ENCODE measurements at regions of chr13 and their contacts with region 1.

Region 1: GRCh38 chr13:88976466-88976865 is 1305.3 kb downstream of the SLITRK5 start:
- DNase-seq: no peak
- ATAC-seq: no peak
- H3K4me3 ChIP-seq: no peak overlapping the region
- H3K27ac ChIP-seq: no peak overlapping the region
- H3K4me1 ChIP-seq: no peaks in the 10 kb centered on the region
- H3K27me3 ChIP-seq: no peaks in the 10 kb centered on the region
- CTCF ChIP-seq: no peak

Region 2: GRCh38 chr13:87919956-87920355 is 1056.5 kb before region 1 on chr13:
- CTCF ChIA-PET with region 1: no interaction called
- POLR2A ChIA-PET with region 1: no interaction called
- in situ Hi-C with region 1: no loop called
- intact Hi-C with region 1: no loop called
- DNase-seq: no peak
- ATAC-seq: no peak
- H3K4me3 ChIP-seq: no peak overlapping the region
- H3K27ac ChIP-seq: no peak overlapping the region
- H3K4me1 ChIP-seq: no peaks in the 10 kb centered on the region
- H3K27me3 ChIP-seq: no peaks in the 10 kb centered on the region
- CTCF ChIP-seq: no peak

Region 3: DNA sequence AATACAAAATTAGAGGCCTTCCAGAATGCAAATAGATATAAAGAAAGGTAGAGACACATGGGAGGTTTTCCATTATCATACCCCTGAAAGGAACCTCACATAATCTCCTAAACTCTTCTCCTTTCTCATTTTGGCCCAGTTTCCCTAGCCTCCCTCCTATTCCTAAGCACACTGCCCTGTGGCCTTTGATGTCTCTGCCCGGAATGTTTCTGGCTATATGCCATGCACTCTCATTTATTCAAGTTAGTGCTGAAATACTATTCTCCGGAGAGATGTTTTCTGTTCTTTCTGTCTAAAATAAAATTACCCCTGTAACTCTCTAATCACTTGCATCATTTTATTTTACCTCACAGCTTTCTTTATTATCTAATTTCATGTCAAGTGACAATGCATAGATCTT is 17.6 kb before region 1 on chr13:
- CTCF ChIA-PET with region 1: interaction called, 11 read pairs
- POLR2A ChIA-PET with region 1: no interaction called
- in situ Hi-C with region 1: no loop called
- intact Hi-C with region 1: no loop called
- DNase-seq: no peak
- ATAC-seq: no peak
- H3K4me3 ChIP-seq: no peak overlapping the region
- H3K27ac ChIP-seq: no peak overlapping the region
- H3K4me1 ChIP-seq: no peaks in the 10 kb centered on the region
- H3K27me3 ChIP-seq: no peaks in the 10 kb centered on the region
- CTCF ChIP-seq: no peak